CD8-positive, alpha-beta T cell (primary cell): ENCODE measurements at regions of chr7 and their contacts with region 1.

Region 1: DNA sequence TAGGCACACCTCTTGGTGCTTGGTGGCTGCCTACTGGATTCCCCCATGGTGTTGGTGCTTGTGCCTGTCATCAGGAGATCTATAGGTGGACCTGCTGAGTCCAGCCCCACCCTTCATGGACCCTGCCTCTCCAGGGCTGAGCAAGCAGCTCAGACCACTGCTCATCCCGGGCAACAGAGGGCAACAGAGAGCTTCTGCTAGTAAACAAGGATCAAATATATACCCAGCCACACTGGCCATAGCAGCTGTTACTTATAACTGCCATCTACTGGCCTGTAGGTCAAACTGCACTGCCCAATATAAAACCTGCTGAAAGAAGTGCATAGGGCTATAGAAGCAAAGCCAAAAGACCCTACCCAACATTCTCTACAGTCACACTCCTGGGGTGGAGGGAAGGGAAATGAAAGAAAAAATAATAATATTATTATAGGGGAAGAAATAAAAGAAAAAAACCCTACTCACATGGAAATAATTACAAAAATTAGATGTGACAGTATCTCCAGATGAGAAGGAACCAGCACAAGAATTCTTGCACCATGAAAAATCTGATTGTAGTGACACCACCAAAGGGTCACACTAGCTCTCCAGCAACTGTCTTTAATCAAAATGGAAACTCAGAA is 54.9 kb upstream of the ZNF800 start:
- DNase-seq: peak in 8 of 9 experiments; percentile 25 to 85 (median 50)
- ATAC-seq: peak; percentile 99
- H3K4me3 ChIP-seq: no peak overlapping the region
- H3K4me3 Mint-ChIP-seq: no peak overlapping the region
- H3K27ac ChIP-seq: no peak overlapping the region
- H3K27ac Mint-ChIP-seq: no peak overlapping the region
- H3K4me1 ChIP-seq: peaks cover 13% of the 10 kb centered on the region
- H3K4me1 Mint-ChIP-seq: peaks cover 20% of the 10 kb centered on the region
- H3K27me3 ChIP-seq: no peaks in the 10 kb centered on the region
- H3K27me3 Mint-ChIP-seq: peaks cover 6% of the 10 kb centered on the region
- CTCF ChIP-seq: peak; percentile 78

Region 2: GRCh38 chr7:127347567-127348246 is 99.7 kb before region 1 on chr7:
- CTCF ChIA-PET with region 1: interaction called, 55 read pairs
- POLR2A ChIA-PET with region 1: interaction called, 4 read pairs
- intact Hi-C with region 1: loop called (anchors 1 kb)
- DNase-seq: peak; percentile 45 to 88 (median 71)
- ATAC-seq: peak; percentile 98
- H3K4me3 ChIP-seq: peak overlapping the region; percentile 26 to 34
- H3K4me3 Mint-ChIP-seq: peak overlapping the region; percentile 72
- H3K27ac ChIP-seq: no peak overlapping the region
- H3K27ac Mint-ChIP-seq: no peak overlapping the region
- H3K4me1 ChIP-seq: peaks cover 3% of the 10 kb centered on the region
- H3K4me1 Mint-ChIP-seq: peaks cover 22% of the 10 kb centered on the region
- H3K27me3 ChIP-seq: no peaks in the 10 kb centered on the region
- H3K27me3 Mint-ChIP-seq: no peaks in the 10 kb centered on the region
- CTCF ChIP-seq: peak; percentile 43

Region 3: DNA sequence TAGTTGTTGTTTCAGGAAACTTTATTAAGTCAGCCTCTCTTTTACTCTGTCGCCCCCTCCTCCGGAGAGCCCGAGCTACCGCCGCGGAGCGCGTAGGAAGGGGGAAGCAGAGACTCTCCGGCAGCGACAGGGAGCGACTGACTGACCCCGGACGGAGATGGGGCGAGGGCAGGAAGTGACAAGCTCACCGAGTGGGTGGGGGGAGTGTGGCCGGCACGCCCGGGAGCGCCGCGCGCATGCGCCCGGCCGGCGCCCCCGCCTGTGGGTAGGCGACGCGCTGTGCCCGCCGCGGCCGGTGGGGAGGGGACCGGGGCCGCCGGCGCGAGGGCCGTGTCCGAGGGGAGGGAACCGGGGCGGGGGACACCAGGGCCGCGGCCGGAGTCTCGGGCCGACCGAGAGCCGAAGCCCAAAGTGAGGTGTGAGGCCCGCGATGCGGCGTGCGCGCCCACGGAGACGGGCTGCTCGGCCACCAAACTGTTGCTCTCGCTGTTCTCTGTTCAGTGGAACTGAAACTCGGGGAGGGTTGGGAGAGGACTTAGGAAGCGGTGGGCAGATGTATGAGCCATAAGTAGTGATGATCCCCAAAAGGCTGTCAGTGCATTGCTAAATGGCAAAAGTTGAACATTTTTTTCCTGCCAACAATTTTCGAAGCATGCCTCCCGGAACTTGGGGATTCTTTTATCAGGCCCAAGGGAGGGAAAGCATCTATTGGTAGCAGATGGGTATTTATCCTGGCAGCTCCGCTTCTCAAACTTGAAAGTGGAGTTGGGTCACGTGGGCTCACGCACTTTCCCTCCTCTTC is 54.7 kb before region 1 on chr7 and contains the start of gene ZNF800:
- CTCF ChIA-PET with region 1: interaction called, 25 read pairs
- POLR2A ChIA-PET with region 1: interaction called, 32 read pairs
- intact Hi-C with region 1: loop called (anchors 1 to 5 kb)
- DNase-seq: peak; percentile 73 to 94 (median 86)
- ATAC-seq: peak; percentile 76
- H3K4me3 ChIP-seq: peak within 1 kb of the TSS; percentile 87 to 92
- H3K4me3 Mint-ChIP-seq: peak within 1 kb of the TSS; percentile 96
- H3K27ac ChIP-seq: peak within 1 kb of the TSS; percentile 95 to 99
- H3K27ac Mint-ChIP-seq: peak within 1 kb of the TSS; percentile 98
- H3K4me1 ChIP-seq: peaks cover 45% of the 10 kb centered on the region
- H3K4me1 Mint-ChIP-seq: peaks cover 61% of the 10 kb centered on the region
- H3K27me3 ChIP-seq: no peaks in the 10 kb centered on the region
- H3K27me3 Mint-ChIP-seq: no peaks in the 10 kb centered on the region
- CTCF ChIP-seq: no peak
- total RNA-seq, gene ZNF800: 80.7 to 82.5 TPM

Region 4: DNA sequence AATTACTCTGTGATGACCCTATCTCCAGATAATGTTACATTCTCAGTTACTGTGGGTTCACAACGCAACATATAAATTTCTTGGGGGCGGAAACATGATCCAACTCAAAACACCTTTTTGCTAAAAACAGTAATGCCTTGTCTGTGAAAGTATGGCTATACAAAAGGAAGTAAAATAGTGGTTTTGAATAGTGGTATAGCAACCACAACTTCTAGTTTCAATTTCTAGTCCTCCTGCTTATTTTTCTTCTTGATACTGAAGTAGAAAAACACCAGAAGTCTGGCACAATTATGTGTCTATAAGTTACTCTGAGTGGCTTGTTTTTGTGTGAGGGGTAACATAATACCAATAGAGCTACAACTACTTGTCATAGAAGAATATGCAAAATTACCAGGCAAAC is 33.5 kb before region 1 on chr7:
- CTCF ChIA-PET with region 1: interaction called, 5 read pairs
- POLR2A ChIA-PET with region 1: no interaction called
- intact Hi-C with region 1: loop called in 1 of 2 experiments (anchors 5 kb)
- DNase-seq: peak in 2 of 9 experiments; percentile 52 to 77
- ATAC-seq: peak; percentile 79
- H3K4me3 ChIP-seq: peak overlapping the region in 1 of 2 experiments; percentile 12
- H3K4me3 Mint-ChIP-seq: peak overlapping the region; percentile 71
- H3K27ac ChIP-seq: peak overlapping the region; percentile 26 to 77
- H3K27ac Mint-ChIP-seq: peak overlapping the region; percentile 97
- H3K4me1 ChIP-seq: peaks cover 56% of the 10 kb centered on the region
- H3K4me1 Mint-ChIP-seq: peaks cover 68% of the 10 kb centered on the region
- H3K27me3 ChIP-seq: no peaks in the 10 kb centered on the region
- H3K27me3 Mint-ChIP-seq: no peaks in the 10 kb centered on the region
- CTCF ChIP-seq: no peak

Region 5: GRCh38 chr7:127550247-127550646 is 102.8 kb after region 1 on chr7:
- CTCF ChIA-PET with region 1: no interaction called
- POLR2A ChIA-PET with region 1: no interaction called
- intact Hi-C with region 1: no loop called
- DNase-seq: no peak
- ATAC-seq: no peak
- H3K4me3 ChIP-seq: no peak overlapping the region
- H3K4me3 Mint-ChIP-seq: no peak overlapping the region
- H3K27ac ChIP-seq: no peak overlapping the region
- H3K27ac Mint-ChIP-seq: no peak overlapping the region
- H3K4me1 ChIP-seq: no peaks in the 10 kb centered on the region
- H3K4me1 Mint-ChIP-seq: no peaks in the 10 kb centered on the region
- H3K27me3 ChIP-seq: no peaks in the 10 kb centered on the region
- H3K27me3 Mint-ChIP-seq: peaks cover 6% of the 10 kb centered on the region
- CTCF ChIP-seq: no peak

Region 6: GRCh38 chr7:127585044-127585953 is 137.9 kb after region 1 on chr7 and contains the start of gene GCC1:
- CTCF ChIA-PET with region 1: no interaction called
- POLR2A ChIA-PET with region 1: no interaction called
- intact Hi-C with region 1: loop called in 1 of 2 experiments (anchors 5 kb)
- DNase-seq: peak; percentile 89 to 98 (median 94)
- ATAC-seq: peak; percentile 83
- H3K4me3 ChIP-seq: peak within 1 kb of the TSS; percentile 91 to 99
- H3K4me3 Mint-ChIP-seq: peak within 1 kb of the TSS; percentile 92
- H3K27ac ChIP-seq: peak within 1 kb of the TSS; percentile 94 to 95
- H3K27ac Mint-ChIP-seq: peak within 1 kb of the TSS; percentile 93
- H3K4me1 ChIP-seq: peaks cover 71% of the 10 kb centered on the region
- H3K4me1 Mint-ChIP-seq: peaks cover 79% of the 10 kb centered on the region
- H3K27me3 ChIP-seq: no peaks in the 10 kb centered on the region
- H3K27me3 Mint-ChIP-seq: no peaks in the 10 kb centered on the region
- CTCF ChIP-seq: no peak
- total RNA-seq, gene GCC1: 33.8 to 36.6 TPM